PC-3 (cell line): ENCODE measurements at regions of chr9 and their contacts with region 1.

Region 1: DNA sequence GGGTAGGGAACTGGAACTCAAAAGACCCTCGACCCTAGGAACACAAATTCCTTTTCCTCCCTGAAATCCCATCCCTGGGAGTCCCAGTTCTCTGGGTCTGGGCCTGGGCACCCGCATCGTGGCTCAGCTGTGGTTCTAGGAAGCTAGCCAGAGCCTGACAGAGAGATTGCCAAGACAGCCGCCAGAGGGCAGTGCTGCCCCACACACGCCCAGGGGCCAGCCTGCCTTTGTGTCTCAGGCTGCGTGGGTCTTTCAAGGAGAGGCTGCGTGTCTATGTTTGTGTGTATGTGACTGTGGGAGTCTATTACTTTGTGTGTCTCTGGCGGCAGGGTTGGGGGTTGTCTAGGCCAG is 32.0 kb upstream of the TTLL11 start:
- DNase-seq: peak; percentile 74
- ATAC-seq: peak; percentile 76
- H3K4me3 ChIP-seq: no peak overlapping the region
- H3K27ac ChIP-seq: no peak overlapping the region
- H3K4me1 ChIP-seq: peaks cover 14% of the 10 kb centered on the region
- H3K27me3 ChIP-seq: no peaks in the 10 kb centered on the region
- CTCF ChIP-seq: peak; percentile 89

Region 2: GRCh38 chr9:122099271-122099869 is 25.8 kb before region 1 on chr9:
- CTCF ChIA-PET with region 1: interaction called, 17 read pairs
- POLR2A ChIA-PET with region 1: no interaction called
- intact Hi-C with region 1: loop called (anchors 1 kb)
- DNase-seq: peak; percentile 81
- ATAC-seq: peak; percentile 92
- H3K4me3 ChIP-seq: peak overlapping the region; percentile 64
- H3K27ac ChIP-seq: no peak overlapping the region
- H3K4me1 ChIP-seq: 0 out of 2 replicates have a peak, but pooled peaks cover 3% of the 10 kb centered on the region
- H3K27me3 ChIP-seq: peaks cover 7% of the 10 kb centered on the region; the same call in 1 of the 2 replicates
- CTCF ChIP-seq: peak; percentile 70

Region 3: DNA sequence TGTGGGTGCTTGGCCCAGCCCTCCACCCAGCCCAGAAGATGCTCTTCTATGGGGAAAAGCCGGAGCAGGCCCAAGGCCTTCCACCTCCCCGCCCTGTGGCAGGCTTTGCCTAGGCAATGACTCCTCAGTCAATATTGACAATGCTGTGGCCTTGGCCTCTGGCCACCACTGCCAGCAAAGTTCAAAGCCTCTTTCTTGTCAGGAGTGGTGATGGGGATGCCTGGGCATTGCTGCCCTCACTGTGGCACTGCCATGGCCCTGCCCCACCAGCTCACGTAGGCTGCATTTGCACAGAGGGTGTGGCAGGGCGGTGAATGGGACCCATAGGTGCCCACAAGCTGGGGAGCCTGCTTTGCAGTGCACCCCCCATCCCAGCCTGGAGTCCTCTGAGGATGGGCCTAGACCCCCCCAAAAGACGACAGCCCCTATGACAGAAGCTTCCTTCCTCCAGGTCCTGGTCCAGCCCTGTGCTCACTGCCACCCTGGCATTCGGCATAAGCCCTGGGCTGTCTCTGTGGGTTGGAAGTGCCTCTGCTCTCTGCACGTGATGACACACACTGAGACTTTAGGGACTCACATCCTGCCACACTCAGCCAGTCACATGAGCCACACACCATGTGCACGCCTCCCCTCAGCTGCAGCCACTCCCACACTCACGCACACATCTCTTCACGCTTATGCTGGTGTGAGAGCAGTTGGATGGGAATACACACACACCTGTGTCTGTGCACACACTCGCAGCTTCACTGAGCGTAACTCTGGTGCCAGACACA is 65.7 kb after region 1 on chr9:
- CTCF ChIA-PET with region 1: no interaction called
- POLR2A ChIA-PET with region 1: no interaction called
- intact Hi-C with region 1: no loop called
- DNase-seq: peak; percentile 88
- ATAC-seq: peak; percentile 92
- H3K4me3 ChIP-seq: no peak overlapping the region
- H3K27ac ChIP-seq: peak overlapping the region; percentile 74
- H3K4me1 ChIP-seq: peaks cover 17% of the 10 kb centered on the region
- H3K27me3 ChIP-seq: no peaks in the 10 kb centered on the region
- CTCF ChIP-seq: no peak

Region 4: DNA sequence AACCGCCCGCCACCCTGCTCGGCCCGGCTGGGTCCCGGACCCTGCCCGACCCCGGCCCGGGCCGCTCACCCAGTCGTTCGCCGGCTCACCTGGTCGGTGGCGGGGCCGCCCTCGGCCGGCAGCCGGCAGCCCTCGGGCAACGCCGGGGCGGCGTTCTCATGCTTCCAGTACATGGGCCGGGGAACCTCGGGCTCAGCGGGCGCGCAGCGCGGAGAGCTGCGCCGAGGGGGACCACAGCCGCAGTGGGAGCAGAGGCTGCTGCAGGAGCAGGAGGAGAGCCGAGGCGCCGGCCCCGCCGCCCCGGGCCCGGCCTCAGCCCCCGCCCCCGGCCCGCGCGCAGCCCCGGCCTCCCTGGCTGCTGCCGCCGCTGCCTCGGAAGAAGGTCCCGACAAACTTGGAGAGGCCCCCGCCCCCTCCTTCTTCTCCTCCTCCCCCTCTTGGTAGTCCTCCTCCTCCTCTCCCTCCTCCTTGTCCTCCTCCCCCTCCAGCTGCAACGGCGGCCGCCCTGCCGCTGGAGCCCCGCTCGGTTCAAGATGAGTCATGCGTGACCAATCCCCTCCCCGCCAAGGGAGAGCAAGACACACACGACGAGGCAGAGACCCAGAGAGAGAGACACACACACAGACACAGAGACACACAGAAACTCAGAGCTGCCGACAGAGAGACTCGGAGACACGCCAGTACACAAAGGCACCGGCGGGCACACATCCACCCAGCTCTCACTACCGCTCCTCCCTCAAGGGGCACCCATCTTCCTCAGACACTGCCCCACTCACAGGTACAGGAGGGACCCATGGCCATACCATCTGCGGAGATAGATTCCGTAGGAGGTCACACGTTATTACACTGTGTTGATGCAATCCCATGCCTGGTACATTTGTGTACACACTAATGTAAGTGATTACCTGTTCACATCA is 103.7 kb after region 1 on chr9 and contains the start of gene LHX6:
- CTCF ChIA-PET with region 1: no interaction called
- POLR2A ChIA-PET with region 1: no interaction called
- intact Hi-C with region 1: loop called (anchors 5 kb)
- DNase-seq: peak; percentile 38
- ATAC-seq: peak; percentile 56
- H3K4me3 ChIP-seq: peak within 1 kb of the TSS; percentile 73
- H3K27ac ChIP-seq: no peak within 1 kb of the TSS
- H3K4me1 ChIP-seq: 0 out of 2 replicates have a peak, but pooled peaks cover 5% of the 10 kb centered on the region
- H3K27me3 ChIP-seq: no peaks in the 10 kb centered on the region
- CTCF ChIP-seq: no peak
- total RNA-seq, gene LHX6: 11.1 and 16.5 TPM in 2 replicates

Region 5: GRCh38 chr9:122264360-122265148 is 139.4 kb after region 1 on chr9 and contains the starts of genes MRRF and RBM18:
- CTCF ChIA-PET with region 1: interaction called, 3 read pairs
- POLR2A ChIA-PET with region 1: no interaction called
- intact Hi-C with region 1: loop called (anchors 10 kb)
- DNase-seq: peak; percentile 82
- ATAC-seq: peak; percentile 79
- H3K4me3 ChIP-seq: peak within 1 kb of the TSS; percentile 74
- H3K27ac ChIP-seq: peak within 1 kb of the TSS; percentile 89
- H3K4me1 ChIP-seq: peaks cover 36% of the 10 kb centered on the region
- H3K27me3 ChIP-seq: no peaks in the 10 kb centered on the region
- CTCF ChIP-seq: no peak
- total RNA-seq, gene MRRF: 27.0 and 30.2 TPM in 2 replicates
- total RNA-seq, gene RBM18: 5.1 and 8.3 TPM in 2 replicates

Region 6: GRCh38 chr9:122350638-122351355 is 225.7 kb after region 1 on chr9:
- CTCF ChIA-PET with region 1: interaction called, 34 read pairs
- POLR2A ChIA-PET with region 1: no interaction called
- intact Hi-C with region 1: loop called (anchors 1 kb)
- DNase-seq: peak; percentile 75
- ATAC-seq: peak; percentile 87
- H3K4me3 ChIP-seq: no peak overlapping the region
- H3K27ac ChIP-seq: no peak overlapping the region
- H3K4me1 ChIP-seq: peaks cover 10% of the 10 kb centered on the region; the same call in 1 of the 2 replicates
- H3K27me3 ChIP-seq: no peaks in the 10 kb centered on the region
- CTCF ChIP-seq: peak; percentile 86

Region 7: DNA sequence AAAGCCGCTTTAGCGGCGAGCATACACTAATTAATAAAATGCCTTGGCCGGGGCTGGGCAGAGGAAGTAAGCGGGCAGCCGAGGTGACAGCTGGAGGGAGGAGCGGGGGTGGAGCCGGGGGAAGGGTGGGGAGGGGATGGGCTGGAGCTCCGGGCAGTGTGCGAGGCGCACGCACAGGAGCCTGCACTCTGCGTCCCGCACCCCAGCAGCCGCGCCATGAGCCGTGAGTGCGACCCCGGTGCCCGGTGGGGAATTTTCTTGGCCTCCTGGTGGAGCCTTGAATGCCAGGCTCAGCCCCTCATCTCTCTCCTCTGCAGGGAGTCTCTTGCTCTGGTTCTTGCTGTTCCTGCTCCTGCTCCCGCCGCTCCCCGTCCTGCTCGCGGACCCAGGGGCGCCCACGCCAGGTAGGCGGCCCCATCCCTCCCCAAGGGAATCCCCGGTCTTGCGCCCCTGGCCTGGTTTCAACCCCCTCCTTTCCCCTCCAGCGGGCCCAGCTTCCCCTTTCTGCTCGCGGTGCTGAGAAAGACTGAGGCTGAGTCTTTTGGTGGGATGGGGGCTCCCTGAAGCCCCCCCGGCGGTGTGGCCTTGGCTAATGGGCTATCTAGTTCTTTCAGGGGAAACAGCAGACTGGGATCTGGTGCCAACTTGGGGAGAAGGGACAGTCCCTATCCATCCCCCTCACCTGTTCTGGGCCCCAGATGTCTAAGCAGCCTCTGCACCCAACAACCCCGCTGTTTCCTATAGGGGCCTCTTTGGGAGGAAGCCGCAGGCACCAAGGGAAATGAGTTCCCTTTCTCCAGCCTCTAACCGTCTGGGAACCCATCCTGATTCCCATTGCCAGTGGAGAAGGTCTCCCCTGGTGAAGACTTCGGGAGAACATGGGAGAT is 246.0 kb after region 1 on chr9 and contains the start of gene PTGS1:
- CTCF ChIA-PET with region 1: no interaction called
- POLR2A ChIA-PET with region 1: no interaction called
- intact Hi-C with region 1: no loop called
- DNase-seq: no peak
- ATAC-seq: peak; percentile 50
- H3K4me3 ChIP-seq: peak within 1 kb of the TSS; percentile 50
- H3K27ac ChIP-seq: no peak within 1 kb of the TSS
- H3K4me1 ChIP-seq: peaks cover 22% of the 10 kb centered on the region
- H3K27me3 ChIP-seq: peaks cover 4% of the 10 kb centered on the region; the same call in 1 of the 2 replicates
- CTCF ChIP-seq: no peak
- total RNA-seq, gene PTGS1: 0.44 and 0.86 TPM in 2 replicates

Region 8: DNA sequence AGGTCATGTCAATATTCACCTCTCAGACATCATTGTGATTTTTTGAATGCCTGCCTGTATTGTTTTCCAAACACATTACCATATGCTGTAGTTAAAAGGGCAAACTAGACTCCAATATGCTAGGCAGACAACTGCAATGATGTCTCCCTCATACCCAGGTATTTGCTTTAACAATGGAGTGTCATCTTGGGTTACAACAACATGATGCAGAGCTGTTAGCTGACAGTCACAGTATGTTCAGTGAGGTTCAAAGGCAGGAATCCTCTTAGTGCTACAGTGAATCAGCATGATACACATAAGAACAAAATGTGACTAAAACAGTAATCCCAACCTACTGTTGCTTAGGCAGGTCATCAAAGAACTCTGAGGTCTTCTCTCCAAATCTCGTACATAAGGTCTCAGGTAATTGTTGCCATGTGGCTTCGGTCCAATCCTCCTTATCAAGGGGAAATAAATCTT is 328.6 kb after region 1 on chr9:
- CTCF ChIA-PET with region 1: no interaction called
- POLR2A ChIA-PET with region 1: no interaction called
- intact Hi-C with region 1: loop called (anchors 1 kb)
- DNase-seq: no peak
- ATAC-seq: no peak
- H3K4me3 ChIP-seq: no peak overlapping the region
- H3K27ac ChIP-seq: no peak overlapping the region
- H3K4me1 ChIP-seq: no peaks in the 10 kb centered on the region
- H3K27me3 ChIP-seq: 0 out of 2 replicates have a peak, but pooled peaks cover 8% of the 10 kb centered on the region
- CTCF ChIP-seq: no peak